ENCODE measurements at regions of chr15 and their contacts with region 1.

Region 1: DNA sequence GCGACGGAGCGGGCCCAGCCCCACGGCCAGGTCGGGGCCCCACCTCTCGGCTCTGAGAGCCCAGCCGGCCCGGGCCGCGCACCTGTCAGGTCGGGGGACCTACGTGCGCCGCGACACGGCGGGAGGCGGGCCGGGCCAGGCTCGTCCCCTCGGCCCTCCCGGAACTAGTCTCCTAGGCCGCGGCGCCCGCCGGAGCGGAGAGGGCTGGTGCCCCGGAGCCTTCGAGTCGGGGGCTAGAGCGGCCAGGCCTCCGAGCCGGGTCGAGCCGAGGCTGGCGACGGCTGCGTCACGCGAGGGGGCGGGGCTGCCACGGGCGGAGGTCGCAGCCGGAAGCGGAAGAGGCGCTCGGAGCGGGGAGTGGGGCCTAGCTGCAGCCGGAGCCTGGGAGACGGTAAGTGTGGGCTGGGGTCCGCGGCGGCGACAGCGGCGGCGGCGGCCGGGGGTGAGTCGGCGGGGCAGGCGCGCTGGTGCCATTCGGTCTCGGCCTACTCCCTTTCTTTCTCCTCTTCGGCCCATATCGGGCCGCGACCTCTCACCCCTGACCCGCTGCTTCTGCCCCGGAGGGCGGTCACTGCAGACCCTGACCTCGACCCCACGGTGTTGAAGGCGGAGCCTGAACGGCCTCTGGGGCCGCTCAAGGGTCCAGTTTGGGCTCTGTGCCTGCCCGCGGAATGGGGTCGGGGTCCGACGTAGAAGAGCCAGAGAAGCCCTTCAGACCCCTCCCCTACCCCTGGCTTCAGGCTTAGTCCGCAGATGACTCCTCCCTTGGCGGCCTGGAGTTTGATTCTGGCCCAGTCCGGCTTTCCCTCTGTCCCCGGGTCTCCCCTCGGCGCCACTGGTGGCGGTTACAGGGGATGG is at the start of gene CLK3:
- DNase-seq: peak; percentile 92 to 98 (median 96)
- ATAC-seq: peak; percentile 83
- H3K4me3 ChIP-seq: peak within 1 kb of the TSS; percentile 79
- H3K4me3 Mint-ChIP-seq: peak within 1 kb of the TSS; percentile 91 to 96 (median 93)
- H3K27ac ChIP-seq: peak within 1 kb of the TSS; percentile 100
- H3K27ac Mint-ChIP-seq: peak within 1 kb of the TSS; percentile 92 to 98 (median 95)
- H3K4me1 ChIP-seq: peaks cover 23 to 30% of the 10 kb centered on the region in 2 donors
- H3K4me1 Mint-ChIP-seq: peaks cover 31 to 45% (median 43%) of the 10 kb centered on the region in 7 donors
- H3K27me3 ChIP-seq: no peaks in the 10 kb centered on the region
- H3K27me3 Mint-ChIP-seq: no peaks in the 10 kb centered on the region
- total RNA-seq, gene CLK3: 131 to 273 (median 177) TPM

Region 2: DNA sequence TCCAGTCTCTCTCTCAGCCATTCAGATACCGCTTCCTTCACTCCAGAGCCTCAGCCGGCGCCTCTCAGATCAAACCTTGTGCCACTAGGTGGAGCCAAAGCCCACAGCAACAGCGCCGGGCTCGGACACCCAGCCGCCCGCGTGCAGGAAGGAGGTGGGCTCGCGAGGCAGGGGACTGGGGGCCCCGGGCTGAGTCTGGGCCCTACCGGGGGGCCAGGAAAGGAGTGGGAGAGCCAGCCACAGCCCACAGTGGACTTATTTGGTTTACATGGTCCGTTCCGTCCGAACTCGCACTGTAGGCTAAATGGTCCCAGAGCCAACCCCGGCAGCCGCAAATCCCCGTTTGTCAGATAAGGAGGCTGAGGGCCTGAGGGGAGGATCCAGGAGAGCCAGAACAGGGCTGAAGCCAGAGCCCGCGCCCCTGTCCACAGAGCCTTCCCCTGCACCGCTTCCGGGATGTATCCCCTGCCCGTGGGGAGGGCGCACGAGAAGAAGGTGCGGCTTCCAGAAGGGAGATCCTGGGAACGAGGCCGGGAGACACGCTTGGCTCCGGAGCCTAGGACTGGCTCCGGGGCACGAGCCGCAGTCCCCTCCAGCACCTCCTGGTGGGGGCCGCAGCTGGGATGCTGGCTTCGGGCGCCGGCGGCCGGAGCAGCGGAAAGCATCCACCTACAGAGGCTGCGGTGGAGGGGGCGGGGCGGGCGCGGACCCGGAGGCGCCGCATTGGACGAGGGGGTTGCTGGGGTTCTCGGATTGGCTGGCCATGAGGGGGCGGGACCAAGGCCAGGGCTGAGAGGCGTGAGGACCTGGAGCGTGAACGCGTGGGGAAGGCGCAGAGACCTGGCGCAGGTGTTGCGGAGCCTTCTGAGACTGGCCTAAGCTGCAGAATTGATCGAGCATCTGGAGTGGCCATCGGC is 241.7 kb before region 1 on chr15:
- CTCF ChIA-PET with region 1: interaction called, 3 read pairs
- POLR2A ChIA-PET with region 1: no interaction called
- intact Hi-C with region 1: loop called (anchors 1 to 2 kb)
- DNase-seq: peak; percentile 82 to 94 (median 91)
- ATAC-seq: peak; percentile 97
- H3K4me3 ChIP-seq: peak overlapping the region; percentile 98
- H3K4me3 Mint-ChIP-seq: peak overlapping the region; percentile 68 to 89 (median 84)
- H3K27ac ChIP-seq: peak overlapping the region; percentile 62
- H3K27ac Mint-ChIP-seq: peak overlapping the region; percentile 18 to 82 (median 40)
- H3K4me1 ChIP-seq: peaks cover 9% of the 10 kb centered on the region in 2 donors
- H3K4me1 Mint-ChIP-seq: peaks cover 0 to 32% (median 15%) of the 10 kb centered on the region in 7 donors
- H3K27me3 ChIP-seq: no peaks in the 10 kb centered on the region
- H3K27me3 Mint-ChIP-seq: peaks cover 0 to 31% (median 5%) of the 10 kb centered on the region in 5 donors

Region 3: DNA sequence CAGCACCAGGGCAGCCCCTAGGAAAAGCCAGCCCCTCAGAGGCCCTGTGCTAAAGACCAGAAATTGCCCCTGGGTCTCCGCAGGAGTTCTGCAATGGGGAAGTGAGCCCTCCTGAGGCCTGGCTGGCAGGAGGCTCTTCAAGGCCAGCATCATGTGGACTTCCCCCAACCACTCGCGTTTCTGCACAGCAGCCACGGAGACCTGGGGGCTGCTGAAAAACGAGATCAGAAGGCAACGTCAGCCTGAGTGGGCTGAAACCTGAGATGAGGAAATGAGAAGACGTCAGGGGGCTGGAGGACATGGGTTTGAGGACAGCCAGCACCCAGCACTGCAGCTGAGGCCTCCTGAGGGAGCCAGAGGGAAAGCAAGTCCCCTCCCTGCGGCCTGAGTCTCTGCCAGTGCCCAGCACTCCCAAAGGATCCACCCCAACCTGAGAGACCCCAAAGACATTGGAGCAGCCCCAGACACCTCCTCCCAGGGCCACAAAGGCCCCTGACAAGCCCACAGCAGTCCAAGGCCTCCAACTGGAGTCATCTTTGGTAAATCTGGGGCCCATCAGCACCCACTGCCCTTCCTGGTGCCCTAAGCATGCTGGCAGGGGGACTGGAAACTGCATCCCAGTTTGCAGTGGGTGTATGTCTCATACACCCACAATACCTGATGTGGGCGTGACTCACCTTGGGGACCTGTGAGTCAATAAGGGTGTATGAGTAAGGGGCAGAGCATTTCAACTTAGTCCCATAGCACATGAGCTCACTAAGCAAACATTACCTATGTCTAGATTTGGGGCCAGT is 219.1 kb before region 1 on chr15:
- CTCF ChIA-PET with region 1: no interaction called
- POLR2A ChIA-PET with region 1: no interaction called
- intact Hi-C with region 1: no loop called
- DNase-seq: peak in 1 of 9 donors; percentile 68
- ATAC-seq: peak; percentile 72
- H3K4me3 ChIP-seq: no peak overlapping the region
- H3K4me3 Mint-ChIP-seq: peak overlapping the region in 1 of 10 donors; percentile 67
- H3K27ac ChIP-seq: no peak overlapping the region
- H3K27ac Mint-ChIP-seq: peak overlapping the region in 2 of 9 donors; percentile 67 to 85
- H3K4me1 ChIP-seq: peaks cover 21 to 39% of the 10 kb centered on the region in 2 donors
- H3K4me1 Mint-ChIP-seq: peaks cover 12 to 59% (median 37%) of the 10 kb centered on the region in 7 donors
- H3K27me3 ChIP-seq: no peaks in the 10 kb centered on the region
- H3K27me3 Mint-ChIP-seq: no peaks in the 10 kb centered on the region

Region 4: GRCh38 chr15:74540761-74541493 is 74.8 kb before region 1 on chr15 and contains the start of gene ARID3B:
- CTCF ChIA-PET with region 1: interaction called, 3 read pairs
- POLR2A ChIA-PET with region 1: interaction called, 41 read pairs
- intact Hi-C with region 1: loop called (anchors 1 kb)
- DNase-seq: peak; percentile 72 to 95 (median 90)
- ATAC-seq: peak; percentile 94
- H3K4me3 ChIP-seq: peak within 1 kb of the TSS; percentile 98
- H3K4me3 Mint-ChIP-seq: peak within 1 kb of the TSS; percentile 90 to 99 (median 98)
- H3K27ac ChIP-seq: peak within 1 kb of the TSS; percentile 87
- H3K27ac Mint-ChIP-seq: peak within 1 kb of the TSS; percentile 84 to 99 (median 94)
- H3K4me1 ChIP-seq: peaks cover 18 to 34% of the 10 kb centered on the region in 2 donors
- H3K4me1 Mint-ChIP-seq: peaks cover 46 to 64% (median 55%) of the 10 kb centered on the region in 7 donors
- H3K27me3 ChIP-seq: no peaks in the 10 kb centered on the region
- H3K27me3 Mint-ChIP-seq: no peaks in the 10 kb centered on the region
- total RNA-seq, gene ARID3B: 29.5 to 45.4 (median 36.8) TPM

Region 5: GRCh38 chr15:74635228-74635627 is 19.5 kb after region 1 on chr15:
- CTCF ChIA-PET with region 1: interaction called, 71 read pairs
- POLR2A ChIA-PET with region 1: interaction called, 14 read pairs
- intact Hi-C with region 1: loop called (anchors 2 kb)
- DNase-seq: peak; percentile 41 to 74 (median 65)
- ATAC-seq: peak; percentile 88
- H3K4me3 ChIP-seq: no peak overlapping the region
- H3K4me3 Mint-ChIP-seq: no peak overlapping the region
- H3K27ac ChIP-seq: no peak overlapping the region
- H3K27ac Mint-ChIP-seq: peak overlapping the region in 2 of 9 donors; percentile 25 to 74
- H3K4me1 ChIP-seq: no peaks in the 10 kb centered on the region
- H3K4me1 Mint-ChIP-seq: peaks cover 0 to 7% (median 0%) of the 10 kb centered on the region in 7 donors
- H3K27me3 ChIP-seq: no peaks in the 10 kb centered on the region
- H3K27me3 Mint-ChIP-seq: no peaks in the 10 kb centered on the region

Region 6: GRCh38 chr15:74730619-74731316 is 115.0 kb after region 1 on chr15:
- CTCF ChIA-PET with region 1: no interaction called
- POLR2A ChIA-PET with region 1: no interaction called
- intact Hi-C with region 1: no loop called
- DNase-seq: no peak
- ATAC-seq: no peak
- H3K4me3 ChIP-seq: no peak overlapping the region
- H3K4me3 Mint-ChIP-seq: no peak overlapping the region
- H3K27ac ChIP-seq: no peak overlapping the region
- H3K27ac Mint-ChIP-seq: no peak overlapping the region
- H3K4me1 ChIP-seq: peaks cover 3 to 6% of the 10 kb centered on the region in 2 donors
- H3K4me1 Mint-ChIP-seq: peaks cover 4 to 7% (median 6%) of the 10 kb centered on the region in 7 donors
- H3K27me3 ChIP-seq: no peaks in the 10 kb centered on the region
- H3K27me3 Mint-ChIP-seq: peaks cover 8 to 32% (median 21%) of the 10 kb centered on the region in 5 donors

Region 7: DNA sequence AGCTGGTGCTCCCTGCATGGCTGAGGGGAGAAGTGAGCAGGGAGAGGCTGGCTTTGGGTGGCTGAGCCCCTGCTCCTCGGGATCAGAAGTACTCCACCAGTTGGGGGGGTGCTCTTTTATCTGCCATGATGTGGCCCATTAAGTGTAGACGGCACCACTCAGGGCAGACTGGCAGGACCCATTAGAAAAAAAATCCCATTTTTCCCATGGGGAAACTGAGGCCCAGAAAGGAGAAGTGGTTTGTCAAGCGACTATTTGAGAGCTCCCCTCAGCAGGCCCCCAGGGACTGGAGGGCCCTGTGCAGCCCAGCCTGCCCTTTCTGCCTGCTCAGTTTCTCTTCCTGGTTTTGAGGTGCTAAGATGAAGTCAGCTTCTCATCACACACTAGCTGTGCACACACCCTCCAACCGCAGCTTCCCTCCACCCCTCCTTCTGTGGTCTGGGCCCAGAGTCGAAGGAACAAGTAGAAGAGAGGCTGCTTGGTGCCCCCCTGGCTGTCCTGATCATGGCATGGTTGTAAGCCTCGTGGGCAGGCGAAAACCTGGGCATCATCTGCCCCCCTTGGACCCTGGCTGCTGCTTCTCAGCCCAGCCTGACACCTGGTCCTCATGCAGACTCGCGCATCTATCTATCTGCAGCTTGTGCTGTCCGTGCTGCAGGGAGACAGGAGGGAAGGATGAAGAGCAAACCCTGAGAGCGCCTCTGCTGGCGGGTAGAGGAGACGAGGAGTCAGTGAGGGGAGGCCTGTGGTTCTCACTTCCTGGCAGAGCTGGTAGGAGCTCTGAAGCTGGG is 171.7 kb after region 1 on chr15:
- CTCF ChIA-PET with region 1: interaction called, 3 read pairs
- POLR2A ChIA-PET with region 1: interaction called, 19 read pairs
- intact Hi-C with region 1: loop called in 1 of 2 experiments (anchors 10 kb)
- DNase-seq: peak; percentile 69 to 97 (median 96)
- ATAC-seq: peak; percentile 85
- H3K4me3 ChIP-seq: peak overlapping the region; percentile 85
- H3K4me3 Mint-ChIP-seq: peak overlapping the region; percentile 87 to 97 (median 93)
- H3K27ac ChIP-seq: peak overlapping the region; percentile 92
- H3K27ac Mint-ChIP-seq: peak overlapping the region; percentile 95 to 99 (median 98)
- H3K4me1 ChIP-seq: peaks cover 66 to 72% of the 10 kb centered on the region in 2 donors
- H3K4me1 Mint-ChIP-seq: peaks cover 57 to 78% (median 75%) of the 10 kb centered on the region in 7 donors
- H3K27me3 ChIP-seq: no peaks in the 10 kb centered on the region
- H3K27me3 Mint-ChIP-seq: no peaks in the 10 kb centered on the region

Region 8: GRCh38 chr15:74937596-74938296 is 322.0 kb after region 1 on chr15 and contains the start of gene COX5A:
- CTCF ChIA-PET with region 1: no interaction called
- POLR2A ChIA-PET with region 1: interaction called, 4 read pairs
- intact Hi-C with region 1: loop called in 1 of 2 experiments (anchors 1 kb)
- DNase-seq: peak; percentile 86 to 94 (median 92)
- ATAC-seq: peak; percentile 99
- H3K4me3 ChIP-seq: peak within 1 kb of the TSS; percentile 62
- H3K4me3 Mint-ChIP-seq: peak within 1 kb of the TSS; percentile 87 to 97 (median 94)
- H3K27ac ChIP-seq: peak within 1 kb of the TSS; percentile 85
- H3K27ac Mint-ChIP-seq: peak within 1 kb of the TSS; percentile 85 to 95 (median 91)
- H3K4me1 ChIP-seq: peaks cover 0 to 17% of the 10 kb centered on the region in 2 donors
- H3K4me1 Mint-ChIP-seq: peaks cover 16 to 38% (median 26%) of the 10 kb centered on the region in 7 donors
- H3K27me3 ChIP-seq: no peaks in the 10 kb centered on the region
- H3K27me3 Mint-ChIP-seq: peaks cover 0 to 3% (median 0%) of the 10 kb centered on the region in 5 donors
- total RNA-seq, gene COX5A: 44.4 to 210 (median 59.2) TPM

Region 9: GRCh38 chr15:75639709-75640482 is 1024.2 kb after region 1 on chr15 and contains the start of gene IMP3:
- CTCF ChIA-PET with region 1: no interaction called
- POLR2A ChIA-PET with region 1: no interaction called
- intact Hi-C with region 1: loop called in 1 of 2 experiments (anchors 10 kb)
- DNase-seq: peak; percentile 75 to 96 (median 93)
- ATAC-seq: peak; percentile 95
- H3K4me3 ChIP-seq: peak within 1 kb of the TSS; percentile 97
- H3K4me3 Mint-ChIP-seq: peak within 1 kb of the TSS; percentile 84 to 98 (median 95)
- H3K27ac ChIP-seq: peak within 1 kb of the TSS; percentile 85
- H3K27ac Mint-ChIP-seq: peak within 1 kb of the TSS; percentile 39 to 98 (median 96)
- H3K4me1 ChIP-seq: peaks cover 23 to 24% of the 10 kb centered on the region in 2 donors
- H3K4me1 Mint-ChIP-seq: peaks cover 33 to 49% (median 39%) of the 10 kb centered on the region in 7 donors
- H3K27me3 ChIP-seq: no peaks in the 10 kb centered on the region
- H3K27me3 Mint-ChIP-seq: no peaks in the 10 kb centered on the region
- total RNA-seq, gene IMP3: 32.3 to 100 (median 89.5) TPM

Measured in naive thymus-derived CD4-positive, alpha-beta T cell (primary cell).